ENCODE measurements at regions of chr1 and their contacts with region 1.

Region 1: DNA sequence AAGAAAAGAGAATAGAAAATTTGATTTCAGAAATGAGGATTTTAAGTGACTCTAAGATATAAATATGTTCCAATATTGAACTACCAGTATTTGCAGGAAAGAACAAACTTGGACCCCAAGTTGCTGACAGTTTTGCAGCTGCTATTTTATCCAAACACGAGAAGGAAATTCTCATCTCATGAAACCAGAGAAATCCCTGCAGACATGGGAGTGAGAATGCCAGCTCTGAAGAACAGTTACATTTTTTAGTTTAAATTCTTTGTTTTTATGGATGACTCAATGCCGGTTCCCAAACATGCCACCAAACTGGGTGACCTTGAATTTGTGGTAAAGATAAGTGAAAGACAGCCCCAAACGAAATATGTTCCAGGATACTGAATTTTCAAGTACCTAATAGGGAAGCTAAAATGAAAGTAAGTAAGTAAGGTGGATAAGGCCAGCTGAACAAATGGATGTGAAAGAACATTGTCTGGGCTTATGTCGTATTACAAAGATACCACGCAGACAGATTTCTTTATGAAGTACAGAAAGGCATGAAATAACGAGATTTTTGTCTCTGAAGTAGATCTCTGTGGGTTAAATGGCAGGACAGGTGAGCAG is 19.9 kb downstream of the TLR5 start:
- DNase-seq: no peak
- H3K4me3 ChIP-seq: no peak overlapping the region
- H3K27ac ChIP-seq: no peak overlapping the region
- H3K4me1 ChIP-seq: peaks cover 3 to 8% (median 5%) of the 10 kb centered on the region in 4 experiments; a peak in 5 of 7 replicates
- H3K27me3 ChIP-seq: peaks cover 0 to 2% (median under 1%) of the 10 kb centered on the region in 4 experiments; a peak in 1 of 7 replicates
- CTCF ChIP-seq: no peak
- EP300 ChIP-seq: no peak
- POLR2A ChIP-seq: no peak
- RAD21 ChIP-seq: no peak

Region 2: GRCh38 chr1:222750651-222751050 is 372.5 kb before region 1 on chr1:
- CTCF ChIA-PET with region 1: interaction called, 13 read pairs
- POLR2A ChIA-PET with region 1: no interaction called
- DNase-seq: no peak
- H3K4me3 ChIP-seq: no peak overlapping the region
- H3K27ac ChIP-seq: no peak overlapping the region
- H3K4me1 ChIP-seq: no peaks in the 10 kb centered on the region
- H3K27me3 ChIP-seq: no peaks in the 10 kb centered on the region
- CTCF ChIP-seq: no peak
- EP300 ChIP-seq: no peak
- POLR2A ChIP-seq: no peak
- RAD21 ChIP-seq: no peak

Region 3: GRCh38 chr1:222792744-222793143 is 330.4 kb before region 1 on chr1:
- CTCF ChIA-PET with region 1: interaction called, 47 read pairs
- POLR2A ChIA-PET with region 1: no interaction called
- DNase-seq: no peak
- H3K4me3 ChIP-seq: no peak overlapping the region
- H3K27ac ChIP-seq: no peak overlapping the region
- H3K4me1 ChIP-seq: no peaks in the 10 kb centered on the region; a peak in 1 of 7 replicates
- H3K27me3 ChIP-seq: no peaks in the 10 kb centered on the region; a peak in 1 of 7 replicates
- CTCF ChIP-seq: peak in 2 of 3 experiments; percentile 55 to 59; a peak in 2 of 4 replicates
- EP300 ChIP-seq: no peak
- POLR2A ChIP-seq: no peak
- RAD21 ChIP-seq: peak; percentile 91

Region 4: GRCh38 chr1:223001653-223002634 is 121.2 kb before region 1 on chr1:
- CTCF ChIA-PET with region 1: interaction called, 11 read pairs
- POLR2A ChIA-PET with region 1: no interaction called
- DNase-seq: no peak
- H3K4me3 ChIP-seq: no peak overlapping the region
- H3K27ac ChIP-seq: no peak overlapping the region
- H3K4me1 ChIP-seq: peaks cover 0 to 2% (median under 1%) of the 10 kb centered on the region in 4 experiments; a peak in 3 of 7 replicates
- H3K27me3 ChIP-seq: no peaks in the 10 kb centered on the region; a peak in 1 of 7 replicates
- CTCF ChIP-seq: peak; percentile 49 to 65 (median 51)
- EP300 ChIP-seq: no peak
- POLR2A ChIP-seq: no peak
- RAD21 ChIP-seq: peak; percentile 74 to 80

Region 5: DNA sequence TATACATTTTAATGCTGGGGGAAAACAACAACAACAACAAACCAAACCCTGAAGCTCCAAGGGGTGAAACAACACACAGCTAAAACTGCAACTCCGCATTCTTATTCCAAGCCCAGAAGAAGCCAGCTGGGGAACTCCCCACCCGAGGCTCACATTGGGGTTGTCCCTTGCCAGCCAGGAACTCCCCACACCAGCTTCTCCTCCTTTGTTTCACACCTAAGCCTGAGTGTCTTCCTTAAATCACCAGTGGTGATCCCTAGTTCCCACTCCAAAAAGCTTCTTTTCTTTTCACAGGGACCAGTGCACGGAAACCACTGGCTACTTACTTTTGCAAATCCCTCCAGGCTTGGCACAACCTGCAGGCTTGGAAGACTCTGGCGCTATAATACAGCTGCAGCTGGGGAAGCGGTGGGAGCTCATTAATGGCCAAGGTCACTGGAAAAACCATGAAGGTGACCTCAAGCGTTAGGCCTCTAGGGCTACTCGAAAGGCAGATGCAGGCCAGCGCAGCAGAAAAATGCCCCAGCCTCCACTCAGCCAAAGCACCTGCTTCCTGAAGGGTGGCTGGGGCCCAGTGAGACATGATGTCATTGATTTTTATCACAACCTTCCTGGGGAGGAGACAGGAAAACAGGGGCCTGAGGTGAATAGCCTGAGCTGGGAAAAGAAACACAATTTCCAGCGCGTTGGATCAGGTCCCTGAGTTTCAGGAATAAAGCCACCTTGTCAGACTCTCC is 20.1 kb before region 1 on chr1:
- CTCF ChIA-PET with region 1: interaction called, 26 read pairs
- POLR2A ChIA-PET with region 1: no interaction called
- DNase-seq: no peak
- H3K4me3 ChIP-seq: no peak overlapping the region
- H3K27ac ChIP-seq: no peak overlapping the region
- H3K4me1 ChIP-seq: no peaks in the 10 kb centered on the region
- H3K27me3 ChIP-seq: no peaks in the 10 kb centered on the region
- CTCF ChIP-seq: no peak
- EP300 ChIP-seq: no peak
- POLR2A ChIP-seq: no peak
- RAD21 ChIP-seq: no peak

Region 6: GRCh38 chr1:223142795-223143536 is 19.9 kb after region 1 on chr1 and contains the start of gene TLR5:
- CTCF ChIA-PET with region 1: interaction called, 60 read pairs
- POLR2A ChIA-PET with region 1: no interaction called
- DNase-seq: peak; percentile 67 to 93
- H3K4me3 ChIP-seq: peak within 1 kb of the TSS; percentile 25 to 60 (median 42)
- H3K27ac ChIP-seq: no peak within 1 kb of the TSS
- H3K4me1 ChIP-seq: peaks cover 0 to 12% (median 5%) of the 10 kb centered on the region in 4 experiments; a peak in 5 of 7 replicates
- H3K27me3 ChIP-seq: peaks cover 0 to 6% (median 4%) of the 10 kb centered on the region in 4 experiments; a peak in 4 of 7 replicates
- CTCF ChIP-seq: peak; percentile 52 to 61 (median 61)
- EP300 ChIP-seq: no peak
- POLR2A ChIP-seq: 0 out of 3 replicates have a peak, but pooled peaks of 1 of the 2 experiments have one; percentile 27
- RAD21 ChIP-seq: peak; percentile 25 to 44; a peak in 2 of 4 replicates
- total RNA-seq, gene TLR5: 0.35 and 0.94 TPM in 2 replicates